ENCODE measurements at regions of chr14 and their contacts with region 1.

Region 1: DNA sequence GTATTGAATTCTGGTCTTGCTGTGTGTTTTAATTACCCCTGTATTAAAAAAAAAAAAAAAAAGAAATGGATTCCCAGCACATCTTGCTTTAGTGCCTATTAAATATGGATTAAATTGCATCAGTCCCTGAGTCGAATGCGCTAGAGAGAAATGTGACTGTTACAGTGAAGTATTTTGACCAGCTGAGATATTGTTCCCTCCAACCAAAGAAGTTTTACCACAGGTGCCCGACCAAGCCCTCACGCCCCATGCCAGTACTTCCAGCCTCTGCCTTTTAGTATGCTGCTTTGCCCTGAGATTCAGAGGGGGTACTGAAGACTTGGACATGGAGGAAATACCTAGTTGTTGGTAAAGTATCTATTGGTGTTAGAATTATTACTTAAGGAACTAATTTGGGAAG is 159.7 kb downstream of the TTLL5 start:
- DNase-seq: no peak
- H3K4me3 ChIP-seq: no peak overlapping the region
- H3K27ac ChIP-seq: no peak overlapping the region
- H3K4me1 ChIP-seq: no peaks in the 10 kb centered on the region
- H3K27me3 ChIP-seq: no peaks in the 10 kb centered on the region
- CTCF ChIP-seq: no peak

Region 2: GRCh38 chr14:75757644-75758402 is 62.9 kb before region 1 on chr14:
- CTCF ChIA-PET with region 1: no interaction called
- POLR2A ChIA-PET with region 1: interaction called, 14 read pairs
- intact Hi-C with region 1: no loop called
- DNase-seq: no peak
- H3K4me3 ChIP-seq: no peak overlapping the region
- H3K27ac ChIP-seq: no peak overlapping the region
- H3K4me1 ChIP-seq: no peaks in the 10 kb centered on the region
- H3K27me3 ChIP-seq: no peaks in the 10 kb centered on the region
- CTCF ChIP-seq: no peak

Region 3: GRCh38 chr14:75831458-75831857 is 10.7 kb after region 1 on chr14:
- CTCF ChIA-PET with region 1: no interaction called
- POLR2A ChIA-PET with region 1: no interaction called
- intact Hi-C with region 1: no loop called
- DNase-seq: no peak
- H3K4me3 ChIP-seq: no peak overlapping the region
- H3K27ac ChIP-seq: no peak overlapping the region
- H3K4me1 ChIP-seq: no peaks in the 10 kb centered on the region
- H3K27me3 ChIP-seq: no peaks in the 10 kb centered on the region
- CTCF ChIP-seq: no peak

Region 4: GRCh38 chr14:75861161-75861621 is 40.4 kb after region 1 on chr14:
- CTCF ChIA-PET with region 1: no interaction called
- POLR2A ChIA-PET with region 1: no interaction called
- intact Hi-C with region 1: no loop called
- DNase-seq: no peak
- H3K4me3 ChIP-seq: no peak overlapping the region
- H3K27ac ChIP-seq: no peak overlapping the region
- H3K4me1 ChIP-seq: no peaks in the 10 kb centered on the region
- H3K27me3 ChIP-seq: no peaks in the 10 kb centered on the region
- CTCF ChIP-seq: no peak